Activated CD4-positive, alpha-beta memory T cell treated with anti-CD3 and anti-CD28 coated beads for 36 hours (primary cell): ENCODE measurements at regions of chr17 and their contacts with region 1.

Region 1: GRCh38 chr17:51537996-51538550 is 277.7 kb downstream of the UTP18 start:
- DNase-seq: no peak
- H3K4me3 Mint-ChIP-seq: no peak overlapping the region
- H3K27ac Mint-ChIP-seq: no peak overlapping the region
- H3K4me1 Mint-ChIP-seq: peaks cover 9% of the 10 kb centered on the region
- H3K27me3 Mint-ChIP-seq: no peaks in the 10 kb centered on the region

Region 2: DNA sequence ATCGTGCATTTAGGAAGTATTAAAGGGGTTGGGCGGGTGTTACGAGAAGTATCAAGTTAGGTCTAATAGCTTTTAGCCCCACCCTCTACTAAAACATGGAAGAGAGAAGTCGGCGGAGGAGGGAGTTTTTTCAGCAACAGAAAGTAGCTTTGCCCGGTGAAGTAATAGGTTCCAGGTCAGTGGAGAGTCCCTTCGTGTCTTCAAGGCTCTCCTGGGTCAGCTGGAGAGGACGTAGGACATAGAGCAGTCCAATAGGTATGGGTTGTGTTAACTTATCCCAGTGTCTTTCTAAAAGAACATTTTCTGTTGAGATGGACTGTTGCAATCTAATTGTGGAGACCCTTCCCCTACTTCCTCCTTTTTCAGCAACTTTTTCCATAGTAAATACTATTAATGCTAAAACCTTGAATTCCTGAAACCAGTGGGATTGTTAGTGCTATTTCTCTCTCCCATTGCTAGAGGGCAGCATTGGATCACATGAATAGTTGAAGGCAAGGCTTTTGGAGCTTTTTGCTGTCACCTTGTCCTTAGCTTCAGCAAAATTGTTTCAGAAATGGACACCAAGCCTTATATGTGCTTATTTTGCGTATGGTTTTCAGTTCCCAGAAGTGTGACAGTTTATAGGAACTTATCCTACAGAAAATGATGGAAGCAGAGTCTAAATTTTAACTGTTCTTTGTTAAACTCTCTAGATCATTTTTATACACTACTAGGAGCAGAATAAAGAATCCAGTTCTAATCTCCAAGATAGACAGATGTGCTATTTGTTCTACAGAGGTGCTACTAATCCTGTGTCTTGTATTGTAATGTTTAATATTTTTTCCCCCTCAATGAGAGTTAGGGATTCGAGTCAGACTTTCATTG is 239.3 kb before region 1 on chr17:
- CTCF ChIA-PET with region 1: interaction called, 15 read pairs
- POLR2A ChIA-PET with region 1: no interaction called
- intact Hi-C with region 1: loop called (anchors 2 kb)
- DNase-seq: no peak
- H3K4me3 Mint-ChIP-seq: no peak overlapping the region
- H3K27ac Mint-ChIP-seq: no peak overlapping the region
- H3K4me1 Mint-ChIP-seq: no peaks in the 10 kb centered on the region
- H3K27me3 Mint-ChIP-seq: no peaks in the 10 kb centered on the region

Region 3: GRCh38 chr17:51322390-51323029 is 215.6 kb before region 1 on chr17:
- CTCF ChIA-PET with region 1: no interaction called
- POLR2A ChIA-PET with region 1: no interaction called
- intact Hi-C with region 1: loop called (anchors 5 kb)
- DNase-seq: no peak
- H3K4me3 Mint-ChIP-seq: no peak overlapping the region
- H3K27ac Mint-ChIP-seq: no peak overlapping the region
- H3K4me1 Mint-ChIP-seq: no peaks in the 10 kb centered on the region
- H3K27me3 Mint-ChIP-seq: peaks cover 1% of the 10 kb centered on the region

Region 4: DNA sequence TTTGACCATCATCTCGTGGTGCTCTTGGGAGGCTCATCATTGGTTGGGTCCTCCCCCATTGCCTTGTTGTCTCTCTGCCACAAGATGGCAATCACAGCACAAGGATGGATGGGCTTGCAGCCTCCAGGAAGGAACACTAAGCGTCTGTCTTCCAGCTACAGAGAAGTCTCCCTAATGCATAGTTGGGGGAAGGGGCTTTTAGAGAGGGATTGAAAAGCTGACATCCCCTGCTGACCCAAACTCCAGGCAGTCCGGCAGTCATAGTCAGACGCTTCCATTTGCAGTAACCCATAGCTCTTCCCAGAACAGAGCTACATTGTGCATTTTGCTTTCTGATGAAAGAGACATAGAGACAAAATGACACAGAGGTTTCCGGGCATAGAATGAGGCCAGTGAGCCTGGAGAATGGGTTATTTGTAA is 166.3 kb before region 1 on chr17:
- CTCF ChIA-PET with region 1: interaction called, 81 read pairs
- POLR2A ChIA-PET with region 1: no interaction called
- intact Hi-C with region 1: loop called (anchors 1 kb)
- DNase-seq: peak; percentile 70
- H3K4me3 Mint-ChIP-seq: peak overlapping the region; percentile 1
- H3K27ac Mint-ChIP-seq: no peak overlapping the region
- H3K4me1 Mint-ChIP-seq: peaks cover 14% of the 10 kb centered on the region
- H3K27me3 Mint-ChIP-seq: no peaks in the 10 kb centered on the region

Region 5: DNA sequence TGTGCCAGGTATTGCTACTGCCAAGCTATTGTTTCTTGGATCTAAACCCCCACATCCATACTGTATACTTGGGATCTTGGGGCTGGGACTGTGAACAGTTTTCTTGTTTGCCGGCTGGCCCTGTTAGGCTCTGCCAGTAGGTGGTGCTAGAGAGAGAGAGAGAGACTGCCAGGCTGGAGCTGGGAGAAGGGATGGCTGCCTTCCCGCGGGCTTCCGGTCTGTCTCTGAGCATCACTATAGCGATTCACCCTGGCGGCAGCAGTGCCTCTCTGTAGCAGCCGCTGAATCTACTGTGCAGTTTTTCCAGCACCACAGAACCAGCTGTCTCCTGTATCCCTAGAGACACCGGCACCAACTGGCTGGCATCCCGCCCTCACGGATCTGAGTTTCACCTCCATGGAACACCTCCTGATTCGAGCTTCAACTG is 76.5 kb before region 1 on chr17:
- CTCF ChIA-PET with region 1: interaction called, 8 read pairs
- POLR2A ChIA-PET with region 1: no interaction called
- intact Hi-C with region 1: loop called (anchors 5 kb)
- DNase-seq: peak; percentile 72
- H3K4me3 Mint-ChIP-seq: no peak overlapping the region
- H3K27ac Mint-ChIP-seq: no peak overlapping the region
- H3K4me1 Mint-ChIP-seq: no peaks in the 10 kb centered on the region
- H3K27me3 Mint-ChIP-seq: no peaks in the 10 kb centered on the region